ENCODE measurements at regions of chr19 and their contacts with region 1.

Region 1: DNA sequence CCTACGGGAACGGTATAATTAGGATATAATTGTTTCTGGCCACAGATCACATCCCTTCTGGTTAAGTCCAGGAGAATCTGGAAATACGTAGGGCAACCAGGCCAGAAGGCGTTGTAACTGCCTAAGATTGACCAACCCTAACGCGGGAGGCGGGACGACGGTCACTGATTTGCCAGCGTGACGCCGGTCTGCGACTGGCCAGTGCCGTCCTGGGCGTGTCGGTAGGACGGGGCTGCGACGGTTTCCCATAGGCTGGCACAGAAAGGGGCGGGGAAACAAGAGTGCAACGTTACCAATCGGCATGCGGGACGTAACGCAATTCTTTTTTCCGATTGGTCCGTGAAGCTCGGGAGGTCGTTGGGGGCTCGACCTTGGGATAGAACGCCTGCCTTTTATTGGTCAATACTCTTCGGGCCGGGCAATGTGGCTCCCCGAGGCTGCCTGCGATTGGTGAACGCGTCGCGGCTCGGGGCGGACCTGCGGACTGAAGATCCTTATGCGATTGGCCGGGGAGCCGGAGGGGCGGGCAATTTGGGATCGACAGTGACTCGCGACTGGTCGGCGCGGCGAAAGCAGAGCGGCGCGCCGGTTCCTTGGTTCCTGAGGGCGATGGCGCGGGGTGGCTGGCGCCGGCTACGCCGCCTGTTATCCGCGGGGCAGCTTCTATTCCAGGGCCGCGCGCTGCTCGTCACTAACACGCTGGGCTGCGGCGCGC is at the start of gene MPV17L2:
- DNase-seq: peak; percentile 100
- H3K4me3 ChIP-seq: peak within 1 kb of the TSS; percentile 82 to 89 (median 83)
- H3K27ac ChIP-seq: peak within 1 kb of the TSS; percentile 77
- H3K4me1 ChIP-seq: peaks cover 20% of the 10 kb centered on the region
- H3K27me3 ChIP-seq: no peaks in the 10 kb centered on the region
- CTCF ChIP-seq: no peak
- total RNA-seq, gene MPV17L2: 16.8 to 22.5 TPM

Region 2: DNA sequence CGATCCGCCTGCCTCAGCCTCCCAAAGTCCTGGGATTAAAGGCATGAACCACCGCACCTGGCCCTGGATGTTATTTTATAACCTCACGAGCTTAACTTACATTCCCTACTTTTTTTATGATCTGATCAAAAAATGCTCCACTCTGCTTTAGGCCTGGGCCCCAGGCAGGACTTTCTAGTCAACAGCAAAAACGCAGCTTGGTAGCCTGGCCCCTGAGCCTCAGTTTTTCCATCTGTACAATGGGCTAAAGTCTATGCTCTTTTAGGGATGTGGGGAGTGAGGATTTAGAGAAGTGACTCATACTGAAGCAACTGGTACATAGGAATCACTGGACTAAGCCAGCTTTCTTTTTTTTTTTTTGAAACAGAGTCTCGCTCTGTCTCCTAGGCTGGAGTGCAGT is 51.8 kb before region 1 on chr19:
- CTCF ChIA-PET with region 1: no interaction called
- dilution Hi-C with region 1: no loop called
- in situ Hi-C with region 1: no loop called
- intact Hi-C with region 1: no loop called
- DNase-seq: no peak
- H3K4me3 ChIP-seq: no peak overlapping the region
- H3K27ac ChIP-seq: no peak overlapping the region
- H3K4me1 ChIP-seq: no peaks in the 10 kb centered on the region
- H3K27me3 ChIP-seq: no peaks in the 10 kb centered on the region
- CTCF ChIP-seq: no peak

Region 3: GRCh38 chr19:18160971-18161635 is 31.7 kb before region 1 on chr19:
- CTCF ChIA-PET with region 1: no interaction called
- dilution Hi-C with region 1: loop called (anchors 5 kb)
- in situ Hi-C with region 1: no loop called
- intact Hi-C with region 1: loop called (anchors 1 kb)
- DNase-seq: peak; percentile 57
- H3K4me3 ChIP-seq: peak overlapping the region in 2 of 3 experiments; percentile 43 to 44
- H3K27ac ChIP-seq: no peak overlapping the region
- H3K4me1 ChIP-seq: peaks cover 40% of the 10 kb centered on the region
- H3K27me3 ChIP-seq: no peaks in the 10 kb centered on the region
- CTCF ChIP-seq: peak; percentile 41 to 50

Region 4: DNA sequence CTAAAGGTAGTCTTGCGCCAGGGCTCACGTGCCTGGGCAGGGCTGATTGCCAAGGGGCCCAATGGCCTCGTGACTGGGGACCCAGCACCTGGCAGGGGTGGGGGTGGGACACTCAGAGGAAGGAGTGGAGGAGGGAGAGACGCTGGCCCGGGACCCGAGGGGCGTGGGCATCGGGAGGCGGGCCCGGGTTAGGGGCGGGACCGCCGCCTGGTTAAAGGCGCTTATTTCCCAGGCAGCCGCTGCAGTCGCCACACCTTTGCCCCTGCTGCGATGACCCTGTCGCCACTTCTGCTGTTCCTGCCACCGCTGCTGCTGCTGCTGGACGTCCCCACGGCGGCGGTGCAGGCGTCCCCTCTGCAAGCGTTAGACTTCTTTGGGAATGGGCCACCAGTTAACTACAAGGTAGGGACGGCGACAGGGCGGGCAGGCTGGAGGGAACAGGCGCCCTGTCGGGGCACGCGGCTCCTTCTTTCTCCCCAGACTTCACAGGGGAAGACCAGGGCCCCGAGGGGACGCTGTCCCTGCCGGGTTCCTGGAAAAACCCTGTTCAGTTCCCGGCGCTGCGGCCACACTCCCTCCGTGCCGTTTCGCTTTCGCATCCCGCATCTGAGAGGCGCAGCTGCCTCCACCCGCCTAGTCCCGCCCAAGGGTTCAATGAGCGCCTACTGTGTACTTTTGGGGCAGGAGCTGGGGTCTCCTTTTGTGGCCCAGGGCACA is 19.1 kb before region 1 on chr19 and contains the start of gene IFI30:
- CTCF ChIA-PET with region 1: no interaction called
- dilution Hi-C with region 1: no loop called
- in situ Hi-C with region 1: no loop called
- intact Hi-C with region 1: loop called (anchors 1 kb)
- DNase-seq: no peak
- H3K4me3 ChIP-seq: peak within 1 kb of the TSS; percentile 54 to 61 (median 59)
- H3K27ac ChIP-seq: no peak within 1 kb of the TSS
- H3K4me1 ChIP-seq: peaks cover 10% of the 10 kb centered on the region
- H3K27me3 ChIP-seq: no peaks in the 10 kb centered on the region
- CTCF ChIP-seq: no peak
- total RNA-seq, gene IFI30: 36.2 to 64.3 TPM

Region 5: DNA sequence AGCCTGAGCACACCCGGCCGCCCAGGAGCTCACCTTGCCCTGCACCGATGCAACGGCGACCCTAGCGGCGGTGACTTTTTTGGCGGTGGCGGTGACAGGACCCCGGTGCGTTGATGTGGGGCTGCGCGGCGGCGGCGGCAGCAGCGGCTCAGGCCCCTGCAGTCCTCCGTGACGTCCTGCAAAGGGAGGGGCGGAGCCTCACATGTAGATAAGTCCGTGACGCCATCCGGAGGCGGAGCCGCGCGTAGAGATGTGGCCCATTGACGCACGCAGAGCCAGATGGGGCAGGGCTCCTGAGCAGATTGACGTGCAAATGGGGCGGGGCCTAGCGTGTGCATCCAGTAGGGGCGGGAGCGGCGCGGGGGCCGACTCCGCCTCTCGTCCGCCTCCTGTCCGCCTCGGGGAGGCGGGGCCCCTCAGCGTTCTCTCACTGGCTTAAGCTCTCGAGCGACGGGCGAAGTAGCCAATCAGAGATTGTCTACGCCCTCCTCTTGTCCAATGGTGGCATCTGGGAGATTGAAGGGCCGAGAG is 11.1 kb after region 1 on chr19 and contains the start of gene RAB3A:
- CTCF ChIA-PET with region 1: interaction called, 11 read pairs
- dilution Hi-C with region 1: no loop called
- in situ Hi-C with region 1: no loop called
- intact Hi-C with region 1: loop called (anchors 1 kb)
- DNase-seq: peak; percentile 100
- H3K4me3 ChIP-seq: peak within 1 kb of the TSS; percentile 62 to 89 (median 70)
- H3K27ac ChIP-seq: peak within 1 kb of the TSS; percentile 42
- H3K4me1 ChIP-seq: peaks cover 21% of the 10 kb centered on the region
- H3K27me3 ChIP-seq: no peaks in the 10 kb centered on the region
- CTCF ChIP-seq: no peak
- total RNA-seq, gene RAB3A: 0.33 to 1.8 TPM

Region 6: DNA sequence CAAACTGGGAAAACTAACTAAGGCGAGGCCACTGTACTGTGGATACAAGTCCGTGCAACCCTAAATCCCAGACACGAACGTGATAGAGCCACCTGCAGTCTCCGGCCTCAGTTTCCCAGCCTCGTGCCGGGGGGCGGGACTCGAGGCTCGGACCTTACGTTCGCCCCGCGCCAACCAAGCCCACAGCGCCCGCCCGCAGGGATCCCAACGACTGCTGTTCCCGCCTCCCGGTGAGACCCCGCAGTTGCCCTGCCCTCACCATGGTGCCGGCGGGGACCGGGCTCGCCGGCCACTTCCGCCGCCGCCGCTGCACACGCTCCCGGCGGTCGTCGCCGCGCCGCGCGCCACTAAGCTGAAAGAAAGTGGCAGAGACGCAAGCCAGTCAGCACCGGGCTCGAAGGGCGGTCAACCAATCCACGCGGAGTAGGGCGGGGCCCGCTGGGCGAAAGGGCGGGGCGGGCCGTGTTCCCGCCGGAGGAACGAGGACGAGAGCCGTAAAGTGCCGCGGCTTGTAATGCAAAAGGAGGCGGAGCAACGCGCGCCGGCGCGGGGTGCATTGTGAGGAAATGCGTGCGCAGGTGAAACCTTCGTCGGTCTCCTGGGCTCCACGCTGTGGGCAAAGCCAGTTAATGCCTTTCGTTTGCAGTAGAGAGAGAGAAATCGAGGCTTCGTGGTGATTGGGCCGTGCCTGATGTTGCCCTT is 130.1 kb after region 1 on chr19 and contains the start of gene LSM4:
- CTCF ChIA-PET with region 1: no interaction called
- dilution Hi-C with region 1: loop called (anchors 5 kb)
- in situ Hi-C with region 1: no loop called
- intact Hi-C with region 1: loop called (anchors 2 kb)
- DNase-seq: peak; percentile 98
- H3K4me3 ChIP-seq: peak within 1 kb of the TSS; percentile 73 to 95 (median 82)
- H3K27ac ChIP-seq: peak within 1 kb of the TSS; percentile 82
- H3K4me1 ChIP-seq: peaks cover 16% of the 10 kb centered on the region
- H3K27me3 ChIP-seq: no peaks in the 10 kb centered on the region
- CTCF ChIP-seq: peak; percentile 15 to 61
- total RNA-seq, gene LSM4: 127 to 182 TPM

Region 7: GRCh38 chr19:18328340-18329034 is 135.7 kb after region 1 on chr19:
- CTCF ChIA-PET with region 1: interaction called, 4 read pairs
- dilution Hi-C with region 1: loop called (anchors 5 kb)
- in situ Hi-C with region 1: no loop called
- intact Hi-C with region 1: loop called (anchors 2 kb)
- DNase-seq: peak; percentile 97
- H3K4me3 ChIP-seq: peak overlapping the region in 2 of 3 experiments; percentile 24 to 37
- H3K27ac ChIP-seq: no peak overlapping the region
- H3K4me1 ChIP-seq: peaks cover 13% of the 10 kb centered on the region
- H3K27me3 ChIP-seq: no peaks in the 10 kb centered on the region
- CTCF ChIP-seq: peak; percentile 88 to 94

Region 8: GRCh38 chr19:18349524-18350128 is 156.8 kb after region 1 on chr19:
- CTCF ChIA-PET with region 1: no interaction called
- dilution Hi-C with region 1: no loop called
- in situ Hi-C with region 1: no loop called
- intact Hi-C with region 1: loop called (anchors 5 kb)
- DNase-seq: peak; percentile 39
- H3K4me3 ChIP-seq: no peak overlapping the region
- H3K27ac ChIP-seq: no peak overlapping the region
- H3K4me1 ChIP-seq: peaks cover 10% of the 10 kb centered on the region
- H3K27me3 ChIP-seq: no peaks in the 10 kb centered on the region
- CTCF ChIP-seq: peak; percentile 93 to 95